Prostate gland (tissue), 2 donors: ENCODE measurements at regions of chr4 and their contacts with region 1.

Region 1: GRCh38 chr4:101347557-101348366 is 436 bp upstream of the PPP3CA start:
- DNase-seq: peak; percentile 100
- H3K4me3 ChIP-seq: peak overlapping the region; percentile 86 to 89
- H3K27ac ChIP-seq: peak overlapping the region; percentile 91 to 95
- H3K4me1 ChIP-seq: peaks cover 4% of the 10 kb centered on the region
- H3K27me3 ChIP-seq: no peaks in the 10 kb centered on the region
- CTCF ChIP-seq: peak in 3 of 4 experiments; percentile 9 to 23 (median 22)
- POLR2A ChIP-seq: peak; percentile 82

Region 2: DNA sequence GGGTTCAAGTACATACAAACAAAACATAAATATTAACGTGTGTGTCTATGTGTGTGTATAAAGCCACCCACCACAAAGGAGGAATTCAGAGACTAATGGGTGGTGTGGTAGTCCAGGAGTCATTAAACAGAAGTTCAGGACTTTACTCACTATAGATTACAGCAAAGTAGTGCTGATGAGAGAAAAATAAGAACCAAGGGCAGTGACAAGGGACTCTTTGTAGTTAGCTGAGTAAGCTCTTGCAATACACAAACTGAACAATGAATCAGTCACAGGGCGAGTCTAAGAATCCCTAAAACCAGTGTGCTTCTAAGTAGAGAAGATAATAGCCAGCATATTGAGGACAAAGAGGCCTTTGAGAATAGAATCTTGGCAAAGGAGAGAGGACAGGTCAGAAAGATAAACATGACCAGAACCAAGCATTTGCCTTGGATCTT is 232.8 kb before region 1 on chr4:
- intact Hi-C with region 1: loop called (anchors 5 kb)
- DNase-seq: no peak
- H3K4me3 ChIP-seq: no peak overlapping the region
- H3K27ac ChIP-seq: peak overlapping the region; percentile 17 to 28
- H3K4me1 ChIP-seq: peaks cover 6% of the 10 kb centered on the region
- H3K27me3 ChIP-seq: no peaks in the 10 kb centered on the region
- CTCF ChIP-seq: no peak
- POLR2A ChIP-seq: no peak

Region 3: DNA sequence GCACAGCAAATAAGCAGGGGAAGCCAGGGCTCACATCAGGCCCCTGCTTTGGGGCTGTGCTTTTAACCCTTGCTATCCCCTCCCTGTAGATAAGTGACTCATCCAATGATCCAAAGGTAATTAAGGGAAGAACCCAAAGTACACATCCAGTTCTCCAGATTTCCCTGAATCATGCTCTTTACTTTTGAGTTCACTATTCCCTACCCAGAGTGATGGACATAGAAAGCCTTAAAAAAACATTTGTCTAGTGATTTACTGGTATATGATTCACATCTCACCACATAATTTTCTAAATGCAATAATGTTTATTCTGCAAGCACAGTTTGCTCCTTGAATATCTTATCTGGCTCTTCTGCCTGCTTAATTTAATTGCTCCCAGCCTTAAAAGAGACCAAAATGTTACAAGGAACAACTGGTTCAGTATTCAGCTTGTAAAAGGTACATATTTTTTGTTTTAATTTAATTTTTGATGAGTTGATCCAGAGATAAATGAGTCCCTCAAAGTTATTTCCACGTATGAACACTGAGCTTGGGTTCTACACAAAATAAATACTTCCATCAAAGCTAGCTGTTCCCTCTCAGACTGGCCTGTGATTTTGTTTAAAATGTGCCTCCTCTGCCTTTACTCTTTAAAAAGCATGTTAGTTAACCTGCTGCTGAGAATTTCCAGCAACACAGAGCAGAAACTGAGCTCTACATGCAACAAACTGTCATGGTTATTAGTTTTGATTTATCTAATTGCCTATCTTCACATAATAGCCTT is 136.4 kb before region 1 on chr4:
- intact Hi-C with region 1: loop called (anchors 10 kb)
- DNase-seq: no peak
- H3K4me3 ChIP-seq: no peak overlapping the region
- H3K27ac ChIP-seq: peak overlapping the region; percentile 27 to 56
- H3K4me1 ChIP-seq: peaks cover 12% of the 10 kb centered on the region
- H3K27me3 ChIP-seq: no peaks in the 10 kb centered on the region
- CTCF ChIP-seq: no peak
- POLR2A ChIP-seq: no peak

Region 4: DNA sequence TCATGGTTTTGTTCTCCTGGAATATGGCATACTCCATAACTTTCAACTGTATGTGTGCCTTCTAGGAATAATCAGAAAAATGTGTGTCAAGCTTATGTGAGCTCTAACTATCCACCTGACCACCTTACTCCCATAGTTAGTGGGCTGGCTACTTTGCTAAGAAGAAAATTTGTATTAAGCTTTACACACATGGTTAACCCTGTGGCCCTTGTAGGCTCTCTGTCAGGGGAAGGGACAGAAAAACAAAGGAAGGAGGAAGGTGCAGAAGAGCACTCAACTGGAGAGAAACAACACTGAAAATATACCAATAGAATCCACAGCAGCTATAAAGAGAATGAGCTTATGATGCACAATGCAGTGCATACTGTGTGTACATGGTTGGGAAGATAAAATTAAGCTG is 85.1 kb before region 1 on chr4:
- intact Hi-C with region 1: no loop called
- DNase-seq: no peak
- H3K4me3 ChIP-seq: no peak overlapping the region
- H3K27ac ChIP-seq: no peak overlapping the region
- H3K4me1 ChIP-seq: no peaks in the 10 kb centered on the region
- H3K27me3 ChIP-seq: no peaks in the 10 kb centered on the region
- CTCF ChIP-seq: no peak
- POLR2A ChIP-seq: no peak